Heart right ventricle (tissue), 16 donors: ENCODE measurements at regions of chr7 and their contacts with region 1.

Region 1: GRCh38 chr7:37181550-37181932 is 267.1 kb downstream of the ELMO1 start:
- DNase-seq: no peak
- ATAC-seq: peak in 1 of 8 donors; percentile 21
- H3K4me3 ChIP-seq: no peak overlapping the region
- H3K27ac ChIP-seq: peak overlapping the region in 1 of 10 donors; percentile 8
- H3K4me1 ChIP-seq: peaks cover 0 to 13% (median 0%) of the 10 kb centered on the region in 9 donors
- H3K27me3 ChIP-seq: no peaks in the 10 kb centered on the region
- CTCF ChIP-seq: no peak

Region 2: GRCh38 chr7:36473454-36474282 is 707.9 kb before region 1 on chr7:
- intact Hi-C with region 1: loop called in 1 of 10 experiments (anchors 5 kb)
- DNase-seq: peak; percentile 16 to 29
- ATAC-seq: peak in 3 of 8 donors; percentile 20 to 33 (median 27)
- H3K4me3 ChIP-seq: no peak overlapping the region
- H3K27ac ChIP-seq: no peak overlapping the region
- H3K4me1 ChIP-seq: peaks cover 0 to 6% (median 0%) of the 10 kb centered on the region in 9 donors
- H3K27me3 ChIP-seq: no peaks in the 10 kb centered on the region
- CTCF ChIP-seq: peak in 7 of 9 donors; percentile 34 to 54 (median 42)

Region 3: DNA sequence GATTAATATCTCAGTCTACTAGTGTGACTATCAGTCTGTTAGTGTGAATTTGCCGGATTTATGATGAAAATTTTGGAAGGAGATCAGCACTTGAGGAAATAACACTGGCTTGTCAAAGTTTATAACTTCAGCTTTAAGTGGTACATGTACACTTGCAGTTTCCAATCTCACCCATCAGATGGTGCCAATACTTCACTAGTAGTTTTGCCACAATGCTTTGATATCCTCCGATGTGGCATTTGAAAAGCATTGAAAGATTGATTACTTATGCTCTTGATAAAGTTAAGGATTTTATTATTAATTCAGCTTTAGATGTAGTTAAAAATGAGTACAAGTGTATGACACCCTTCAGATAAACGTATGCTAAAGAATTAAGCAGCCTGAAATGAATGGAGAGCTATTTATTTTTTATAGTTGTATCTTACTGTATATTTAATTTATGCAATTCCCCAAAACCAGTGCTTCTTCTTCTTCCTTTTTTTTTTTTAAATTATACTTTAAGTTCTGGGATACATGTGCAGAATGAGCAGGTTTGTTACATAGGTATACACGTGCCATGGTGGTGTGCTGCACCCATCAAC is 693.7 kb before region 1 on chr7:
- intact Hi-C with region 1: loop called in 6 of 10 experiments (anchors 5 kb)
- DNase-seq: no peak
- ATAC-seq: peak in 1 of 8 donors; percentile 59
- H3K4me3 ChIP-seq: no peak overlapping the region
- H3K27ac ChIP-seq: no peak overlapping the region
- H3K4me1 ChIP-seq: no peaks in the 10 kb centered on the region
- H3K27me3 ChIP-seq: peaks cover 0 to 5% (median 0%) of the 10 kb centered on the region in 7 donors
- CTCF ChIP-seq: peak in 8 of 9 donors; percentile 30 to 75 (median 68)

Region 4: DNA sequence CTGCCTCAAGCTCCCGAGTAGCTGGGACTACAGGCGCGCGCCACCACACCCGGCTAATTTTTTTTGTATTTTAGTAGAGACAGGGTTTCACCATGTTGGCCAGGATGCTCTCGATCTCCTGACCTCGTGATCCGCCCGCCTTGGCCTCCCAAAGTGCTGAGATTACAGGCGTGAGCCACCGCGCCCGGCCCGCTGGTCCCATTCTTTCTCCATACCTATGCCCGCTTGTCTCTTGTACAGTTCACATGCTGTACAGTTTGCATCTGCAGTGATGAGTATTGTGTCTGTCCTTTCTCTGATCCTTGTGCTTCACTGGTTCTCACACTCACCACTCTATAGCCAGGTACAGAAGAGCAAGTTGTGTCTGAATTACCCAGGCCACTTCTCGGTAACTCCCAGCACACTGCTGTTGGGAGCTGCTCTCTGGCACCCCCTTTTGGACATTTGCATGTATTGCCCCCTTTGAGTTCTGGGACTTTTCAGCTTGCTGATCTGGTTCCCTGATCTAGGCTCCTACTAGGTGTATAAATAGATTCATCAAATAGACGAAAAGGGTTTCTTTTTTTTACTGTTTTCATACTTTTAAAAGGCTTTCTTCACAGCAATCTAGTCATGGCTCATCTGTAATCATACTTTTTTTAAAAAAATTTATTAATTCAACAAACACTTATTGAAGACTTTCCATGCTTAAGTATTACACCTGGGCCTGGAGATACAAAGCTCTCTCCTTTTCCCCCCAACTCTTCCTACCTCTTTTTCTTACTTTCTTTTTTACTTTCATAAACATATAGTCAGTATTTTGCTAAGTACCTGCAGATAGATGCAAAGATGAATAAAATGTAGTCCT is 510.7 kb before region 1 on chr7:
- intact Hi-C with region 1: loop called in 2 of 10 experiments (anchors 10 kb)
- DNase-seq: peak in 1 of 2 donors; percentile 27
- ATAC-seq: peak in 4 of 8 donors; percentile 56 to 71 (median 61)
- H3K4me3 ChIP-seq: no peak overlapping the region
- H3K27ac ChIP-seq: no peak overlapping the region
- H3K4me1 ChIP-seq: no peaks in the 10 kb centered on the region
- H3K27me3 ChIP-seq: peaks cover 0 to 3% (median 0%) of the 10 kb centered on the region in 7 donors
- CTCF ChIP-seq: peak; percentile 49 to 87 (median 77)

Region 5: GRCh38 chr7:36967387-36967786 is 214.2 kb before region 1 on chr7:
- intact Hi-C with region 1: loop called in 9 of 10 experiments (anchors 1 to 5 kb)
- DNase-seq: peak; percentile 20 to 74
- ATAC-seq: peak; percentile 85 to 98 (median 94)
- H3K4me3 ChIP-seq: no peak overlapping the region
- H3K27ac ChIP-seq: peak overlapping the region in 1 of 10 donors; percentile 49
- H3K4me1 ChIP-seq: peaks cover 0 to 45% (median 21%) of the 10 kb centered on the region in 9 donors
- H3K27me3 ChIP-seq: no peaks in the 10 kb centered on the region
- CTCF ChIP-seq: peak; percentile 59 to 89 (median 80)

Region 6: GRCh38 chr7:36986429-36987362 is 194.8 kb before region 1 on chr7:
- intact Hi-C with region 1: loop called (anchors 1 to 5 kb)
- DNase-seq: peak; percentile 48 to 60
- ATAC-seq: peak in 6 of 8 donors; percentile 61 to 75 (median 69)
- H3K4me3 ChIP-seq: no peak overlapping the region
- H3K27ac ChIP-seq: no peak overlapping the region
- H3K4me1 ChIP-seq: peaks cover 0 to 29% (median 11%) of the 10 kb centered on the region in 9 donors
- H3K27me3 ChIP-seq: peaks cover 0 to 4% (median 0%) of the 10 kb centered on the region in 7 donors
- CTCF ChIP-seq: peak; percentile 68 to 88 (median 79)

Region 7: DNA sequence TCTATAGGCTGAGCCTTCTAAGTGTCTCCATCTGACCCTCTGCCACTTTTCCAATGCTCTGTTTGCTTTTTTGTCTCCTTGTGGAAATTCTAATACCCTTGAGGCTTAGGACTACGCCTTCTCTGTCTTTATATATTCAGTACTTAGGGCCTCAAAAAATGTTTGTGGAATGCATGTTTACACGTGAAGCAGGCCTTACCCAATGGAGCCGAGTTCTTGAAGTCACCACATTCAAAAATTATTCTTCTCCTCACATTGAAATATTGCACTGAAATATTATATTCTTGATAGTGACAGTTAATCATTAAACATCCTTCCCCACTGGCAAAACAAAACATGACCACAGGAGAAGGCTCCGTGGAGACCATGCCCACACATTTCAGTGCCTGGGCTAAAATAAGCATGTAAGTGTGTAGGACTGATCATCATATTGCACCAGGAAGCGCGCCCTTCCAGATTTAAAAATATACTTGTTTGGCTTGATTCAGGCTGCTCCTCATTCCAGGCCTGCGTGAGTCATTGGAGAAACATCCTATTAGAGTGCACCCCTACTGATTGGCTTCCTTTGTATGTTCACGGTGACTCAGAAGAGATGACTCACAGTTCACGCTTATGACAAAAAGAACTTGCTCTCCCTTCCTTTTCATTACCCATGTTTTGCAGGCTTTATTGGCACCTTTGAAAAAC is 149.8 kb before region 1 on chr7:
- intact Hi-C with region 1: loop called in 1 of 10 experiments (anchors 5 kb)
- DNase-seq: peak; percentile 36 to 88
- ATAC-seq: peak; percentile 99 to 100 (median 100)
- H3K4me3 ChIP-seq: no peak overlapping the region
- H3K27ac ChIP-seq: peak overlapping the region in 9 of 10 donors; percentile 57 to 85 (median 78)
- H3K4me1 ChIP-seq: peaks cover 8 to 45% (median 21%) of the 10 kb centered on the region in 9 donors
- H3K27me3 ChIP-seq: no peaks in the 10 kb centered on the region
- CTCF ChIP-seq: no peak

Region 8: GRCh38 chr7:37663693-37664092 is 482.2 kb after region 1 on chr7:
- intact Hi-C with region 1: no loop called
- DNase-seq: no peak
- ATAC-seq: peak in 2 of 8 donors; percentile 39 to 42
- H3K4me3 ChIP-seq: no peak overlapping the region
- H3K27ac ChIP-seq: peak overlapping the region in 1 of 10 donors; percentile 74
- H3K4me1 ChIP-seq: peaks cover 0 to 34% (median 0%) of the 10 kb centered on the region in 9 donors
- H3K27me3 ChIP-seq: no peaks in the 10 kb centered on the region
- CTCF ChIP-seq: no peak

Region 9: DNA sequence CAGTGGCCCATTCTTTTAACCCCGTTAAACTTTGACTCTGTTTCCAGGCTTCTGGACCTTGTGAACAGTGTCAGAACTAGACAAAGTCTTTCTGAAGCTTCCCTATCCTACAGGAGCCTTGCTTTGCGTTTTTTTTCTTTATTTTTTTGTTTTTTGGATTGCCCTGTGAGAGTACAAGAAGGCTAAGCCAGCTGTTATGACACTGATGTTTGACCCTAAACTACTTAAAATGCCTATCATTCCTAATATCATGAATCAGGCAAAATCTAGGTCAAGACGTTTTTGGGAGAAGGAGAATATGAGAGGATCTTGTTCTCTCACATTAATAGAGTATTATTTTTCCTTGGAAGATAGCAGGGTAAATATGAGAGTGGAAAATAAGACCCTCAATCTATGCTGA is 818.7 kb after region 1 on chr7:
- intact Hi-C with region 1: no loop called
- DNase-seq: no peak
- ATAC-seq: peak in 3 of 8 donors; percentile 41 to 55 (median 52)
- H3K4me3 ChIP-seq: no peak overlapping the region
- H3K27ac ChIP-seq: peak overlapping the region in 2 of 10 donors; percentile 10 to 29
- H3K4me1 ChIP-seq: peaks cover 0 to 15% (median 10%) of the 10 kb centered on the region in 9 donors
- H3K27me3 ChIP-seq: no peaks in the 10 kb centered on the region
- CTCF ChIP-seq: no peak